K562 (cell line): ENCODE measurements at regions of chr21 and their contacts with region 1.

Region 1: GRCh38 chr21:36419996-36420395 is 34.8 kb downstream of the CHAF1B start:
- DNase-seq: peak; percentile 89 to 92 (median 90)
- ATAC-seq: peak; percentile 95
- H3K4me3 ChIP-seq: no peak overlapping the region
- H3K27ac ChIP-seq: no peak overlapping the region
- H3K4me1 ChIP-seq: peaks cover 7 to 13% of the 10 kb centered on the region in 2 experiments; a peak in 4 of 5 replicates
- H3K27me3 ChIP-seq: no peaks in the 10 kb centered on the region
- CTCF ChIP-seq: peak; percentile 86 to 96 (median 94)
- EP300 ChIP-seq: peak; percentile 38; the same call in 1 of the 2 replicates
- POLR2A ChIP-seq: no peak
- RAD21 ChIP-seq: peak; percentile 88 to 96

Region 2: GRCh38 chr21:36471254-36471723 is 51.3 kb after region 1 on chr21:
- CTCF ChIA-PET with region 1: no interaction called
- POLR2A ChIA-PET with region 1: no interaction called
- in situ Hi-C with region 1: no loop called
- intact Hi-C with region 1: loop called (anchors 5 kb)
- DNase-seq: no peak
- ATAC-seq: no peak
- H3K4me3 ChIP-seq: no peak overlapping the region
- H3K27ac ChIP-seq: no peak overlapping the region
- H3K4me1 ChIP-seq: no peaks in the 10 kb centered on the region
- H3K27me3 ChIP-seq: peaks cover 42 to 60% of the 10 kb centered on the region in 2 experiments
- CTCF ChIP-seq: no peak
- EP300 ChIP-seq: no peak
- POLR2A ChIP-seq: no peak
- RAD21 ChIP-seq: no peak

Region 3: DNA sequence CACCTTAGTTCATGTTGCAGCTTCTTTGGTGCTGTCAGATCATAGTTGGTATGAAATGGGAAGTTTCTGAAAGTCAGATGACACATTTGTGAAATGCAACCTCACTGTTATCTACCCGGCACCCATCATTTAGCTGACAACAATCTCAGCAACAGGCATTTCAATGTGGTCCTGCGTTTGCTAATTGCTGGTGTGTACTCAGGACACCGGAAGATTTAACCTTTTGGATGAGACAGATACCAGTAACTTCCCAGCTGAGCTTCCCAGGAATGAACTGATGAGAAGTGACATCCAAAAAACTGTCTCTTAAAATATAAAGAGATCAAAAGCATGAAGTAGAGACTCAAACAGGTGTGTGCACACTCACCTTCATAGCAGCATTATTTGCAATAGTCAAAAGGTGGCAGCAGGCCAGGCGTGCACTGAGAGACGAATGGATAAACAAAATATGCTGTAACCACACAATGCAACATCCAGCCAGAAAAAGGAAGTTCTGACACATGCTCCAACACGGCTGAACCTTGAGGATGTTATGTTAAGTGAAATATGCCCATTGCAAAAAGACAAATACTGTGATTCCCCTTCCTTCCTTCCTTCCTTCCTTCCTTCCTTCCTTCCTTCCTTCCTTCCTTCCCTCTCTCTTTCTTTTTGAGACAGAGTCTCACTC is 67.8 kb after region 1 on chr21:
- CTCF ChIA-PET with region 1: no interaction called
- POLR2A ChIA-PET with region 1: no interaction called
- in situ Hi-C with region 1: no loop called
- intact Hi-C with region 1: loop called (anchors 5 kb)
- DNase-seq: no peak
- ATAC-seq: no peak
- H3K4me3 ChIP-seq: no peak overlapping the region
- H3K27ac ChIP-seq: no peak overlapping the region
- H3K4me1 ChIP-seq: no peaks in the 10 kb centered on the region
- H3K27me3 ChIP-seq: peaks cover 54 to 84% of the 10 kb centered on the region in 2 experiments
- CTCF ChIP-seq: no peak
- EP300 ChIP-seq: no peak
- POLR2A ChIP-seq: no peak
- RAD21 ChIP-seq: no peak

Region 4: DNA sequence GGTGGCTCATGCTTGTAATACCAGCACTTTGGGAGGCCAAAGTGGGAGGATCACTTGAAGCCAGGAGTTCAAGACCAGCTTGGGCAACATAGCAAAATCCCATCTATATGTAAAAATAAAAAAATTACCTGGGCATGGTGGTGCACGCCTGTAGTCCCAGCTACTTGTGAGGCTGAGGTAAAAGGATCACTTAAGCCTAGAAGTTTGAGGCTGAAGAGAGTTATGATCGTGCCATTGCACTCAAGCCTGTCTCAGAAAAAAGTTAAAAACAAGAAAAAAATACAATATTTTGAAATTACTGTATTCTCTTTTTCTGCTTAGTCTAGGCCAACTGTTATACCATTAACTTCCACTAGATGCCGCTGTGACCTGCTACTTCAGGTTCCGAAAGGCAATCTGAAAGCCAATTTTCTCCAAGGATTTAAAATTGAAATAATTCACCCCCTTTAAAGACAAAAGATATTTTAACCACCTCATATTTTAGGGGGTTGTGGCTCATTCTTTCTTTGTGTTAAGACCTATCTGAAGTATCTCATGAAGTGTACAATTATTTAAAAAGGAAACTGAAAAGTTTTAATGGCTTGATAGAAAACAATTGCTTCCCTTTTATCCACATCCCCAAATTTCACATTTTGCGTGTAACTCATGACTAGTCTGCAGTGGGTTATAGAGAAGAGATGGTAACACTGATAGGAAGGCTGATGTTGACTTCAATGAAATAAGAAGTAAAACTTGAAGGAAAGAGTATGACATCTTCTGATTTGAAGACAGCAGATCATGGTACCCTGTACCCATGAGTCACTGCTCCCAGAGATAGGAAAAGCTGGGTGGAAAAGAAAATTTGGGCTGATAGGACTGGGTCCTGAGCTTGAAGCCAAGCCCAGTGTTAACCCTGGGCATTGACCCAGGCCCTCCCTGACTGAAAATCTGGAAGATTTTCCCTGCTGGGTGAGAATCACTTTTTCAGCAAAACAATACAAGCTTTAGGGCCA is 84.4 kb after region 1 on chr21:
- CTCF ChIA-PET with region 1: interaction called, 10 read pairs
- POLR2A ChIA-PET with region 1: no interaction called
- in situ Hi-C with region 1: no loop called
- intact Hi-C with region 1: loop called (anchors 5 kb)
- DNase-seq: peak; percentile 36 to 69 (median 61)
- ATAC-seq: no peak
- H3K4me3 ChIP-seq: no peak overlapping the region
- H3K27ac ChIP-seq: no peak overlapping the region
- H3K4me1 ChIP-seq: no peaks in the 10 kb centered on the region
- H3K27me3 ChIP-seq: peaks cover 22 to 41% of the 10 kb centered on the region in 2 experiments
- CTCF ChIP-seq: peak; percentile 66 to 95 (median 86)
- EP300 ChIP-seq: no peak
- POLR2A ChIP-seq: no peak
- RAD21 ChIP-seq: peak; percentile 79 to 88

Region 5: GRCh38 chr21:36589355-36589971 is 169.5 kb after region 1 on chr21:
- CTCF ChIA-PET with region 1: interaction called, 8 read pairs
- POLR2A ChIA-PET with region 1: interaction called, 4 read pairs
- in situ Hi-C with region 1: no loop called
- intact Hi-C with region 1: loop called (anchors 2 kb)
- DNase-seq: peak; percentile 61 to 66 (median 66)
- ATAC-seq: peak; percentile 93
- H3K4me3 ChIP-seq: no peak overlapping the region
- H3K27ac ChIP-seq: no peak overlapping the region
- H3K4me1 ChIP-seq: no peaks in the 10 kb centered on the region
- H3K27me3 ChIP-seq: peaks cover 34 to 35% of the 10 kb centered on the region in 2 experiments
- CTCF ChIP-seq: peak; percentile 80 to 86 (median 84)
- EP300 ChIP-seq: no peak
- POLR2A ChIP-seq: no peak
- RAD21 ChIP-seq: peak; percentile 73 to 85